Kidney (tissue), 22 donors: ENCODE measurements at regions of chr1 and their contacts with region 1.

Region 1: GRCh38 chr1:167066333-167067122 is 23.6 kb downstream of the GPA33 start:
- DNase-seq: peak; percentile 78 to 91 (median 87)
- H3K4me3 ChIP-seq: no peak overlapping the region
- H3K27ac ChIP-seq: no peak overlapping the region
- H3K4me1 ChIP-seq: peaks cover 0 to 4% (median 0%) of the 10 kb centered on the region in 3 donors
- H3K27me3 ChIP-seq: no peaks in the 10 kb centered on the region
- CTCF ChIP-seq: peak; percentile 85

Region 2: DNA sequence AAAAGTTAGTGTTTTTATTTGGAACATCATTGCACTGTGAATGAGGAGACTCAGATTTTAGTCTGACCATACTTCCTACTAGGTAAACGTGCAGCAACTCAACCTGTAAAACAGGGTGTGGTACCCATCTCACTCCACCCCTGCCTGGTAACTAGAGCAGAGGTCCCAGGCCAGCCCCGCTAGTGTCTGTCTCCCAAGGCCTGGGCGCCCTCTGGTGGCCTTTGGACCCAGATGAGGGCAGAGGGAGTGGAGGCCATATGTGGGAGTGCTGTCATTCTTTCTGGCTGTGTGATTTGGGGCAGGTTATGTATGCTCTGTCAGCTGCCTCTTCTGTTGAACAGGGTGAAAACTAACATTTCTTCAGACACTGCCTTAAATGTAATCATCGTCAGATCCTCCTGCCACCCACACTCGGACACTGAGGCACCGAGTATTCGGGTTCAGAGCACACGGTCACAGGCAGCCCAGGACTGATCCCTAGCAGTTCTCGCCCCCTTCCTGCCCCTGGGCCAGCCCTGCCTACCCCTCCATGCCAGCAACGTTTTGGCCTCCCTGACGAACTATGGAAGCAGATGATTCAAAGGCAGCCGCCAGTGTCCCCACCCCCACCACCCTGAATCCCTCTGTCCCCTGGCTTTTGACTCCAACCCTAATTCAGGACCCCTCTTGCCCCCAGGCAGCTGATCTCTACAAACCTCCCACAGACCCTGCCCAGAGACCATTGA is 375.8 kb after region 1 on chr1:
- intact Hi-C with region 1: loop called (anchors 10 kb)
- DNase-seq: peak; percentile 81 to 92 (median 88)
- H3K4me3 ChIP-seq: no peak overlapping the region
- H3K27ac ChIP-seq: no peak overlapping the region
- H3K4me1 ChIP-seq: peaks cover 0 to 7% (median 0%) of the 10 kb centered on the region in 3 donors
- H3K27me3 ChIP-seq: no peaks in the 10 kb centered on the region
- CTCF ChIP-seq: peak; percentile 69